Mucosa of descending colon (tissue), 3 donors: ENCODE measurements at regions of chr5 and their contacts with region 1.

Region 1: DNA sequence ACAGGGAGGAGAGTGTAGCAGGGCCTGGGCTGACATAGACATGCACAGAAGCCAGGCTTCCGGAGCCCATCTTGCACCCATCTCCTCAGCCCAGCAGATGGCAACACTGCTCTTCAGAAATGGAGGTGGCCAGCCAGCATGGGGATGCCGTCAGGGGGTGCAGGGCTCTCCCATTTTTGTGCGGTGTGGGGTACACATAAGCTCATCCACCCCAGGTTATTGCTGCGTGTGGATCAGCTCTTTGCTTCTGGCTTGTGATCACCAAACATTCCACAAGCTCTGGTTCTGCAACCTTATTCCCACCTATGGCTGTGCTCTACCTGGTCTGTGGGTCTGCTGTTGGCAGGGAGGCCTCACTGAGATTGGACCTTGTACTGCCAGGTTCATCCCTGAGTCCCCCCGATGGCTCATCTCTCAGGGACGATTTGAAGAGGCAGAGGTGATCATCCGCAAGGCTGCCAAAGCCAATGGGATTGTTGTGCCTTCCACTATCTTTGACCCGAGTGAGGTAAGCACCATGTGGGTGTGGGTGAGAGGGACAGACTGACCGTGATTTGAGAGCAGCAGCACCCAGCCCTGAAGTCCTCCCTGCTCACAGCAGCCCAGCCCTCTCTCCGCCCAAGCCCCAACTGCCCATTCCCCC is 17.3 kb downstream of the SLC22A5 start:
- DNase-seq: peak; percentile 82 to 84 (median 84)
- ATAC-seq: peak; percentile 84
- H3K4me3 ChIP-seq: no peak overlapping the region
- H3K4me1 ChIP-seq: peaks cover 22% of the 10 kb centered on the region
- CTCF ChIP-seq: peak; percentile 56

Region 2: DNA sequence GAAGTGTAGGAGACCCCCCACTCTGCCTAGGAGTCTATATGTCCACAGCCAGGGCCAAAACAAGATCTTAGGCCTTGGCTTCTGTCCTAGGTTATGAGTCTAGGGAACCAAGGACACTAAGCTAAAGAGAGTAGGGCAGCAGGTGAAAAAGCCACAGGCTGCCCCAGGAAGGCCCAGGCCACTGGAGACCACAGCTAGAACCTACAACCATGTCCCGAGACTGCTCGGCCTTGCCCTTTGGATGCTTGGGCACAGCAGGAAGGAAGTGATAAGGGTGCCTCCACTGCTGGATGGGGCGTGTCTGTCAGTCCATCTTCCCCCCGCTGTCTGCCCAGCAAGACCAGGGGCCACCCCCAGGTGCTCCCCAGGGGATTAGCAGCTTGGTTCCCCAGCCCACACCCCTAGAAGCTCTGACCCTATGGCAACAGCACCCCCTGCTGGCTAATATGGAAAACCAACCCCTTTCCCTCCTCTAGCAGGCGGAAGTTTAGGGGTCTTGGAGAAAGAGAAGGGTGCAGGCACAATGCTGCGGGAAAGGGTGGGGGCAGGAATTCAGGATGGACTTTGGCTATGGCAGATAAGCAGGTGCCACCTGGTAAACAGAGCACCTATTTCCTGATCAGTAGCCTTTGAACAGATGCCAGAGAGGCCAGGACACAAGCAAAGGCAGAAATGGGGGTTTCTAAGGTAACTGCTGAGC is 114.3 kb after region 1 on chr5:
- intact Hi-C with region 1: loop called (anchors 5 kb)
- DNase-seq: peak; percentile 83 to 88 (median 86)
- ATAC-seq: peak; percentile 59
- H3K4me3 ChIP-seq: no peak overlapping the region
- H3K4me1 ChIP-seq: peaks cover 69% of the 10 kb centered on the region
- CTCF ChIP-seq: peak; percentile 64

Region 3: GRCh38 chr5:132813599-132814502 is 427.1 kb after region 1 on chr5:
- intact Hi-C with region 1: loop called in 1 of 2 experiments (anchors 10 kb)
- DNase-seq: peak in 2 of 3 donors; percentile 59 to 72
- ATAC-seq: peak; percentile 78
- H3K4me3 ChIP-seq: peak overlapping the region; percentile 26
- H3K4me1 ChIP-seq: peaks cover 14% of the 10 kb centered on the region
- CTCF ChIP-seq: no peak